ENCODE measurements at regions of chr14 and their contacts with region 1.

Region 1: GRCh38 chr14:95561001-95561412 is 26.2 kb downstream of the GLRX5 start:
- DNase-seq: peak; percentile 86
- CTCF ChIP-seq: peak; percentile 96

Region 2: GRCh38 chr14:95786566-95786965 is 225.6 kb after region 1 on chr14:
- in situ Hi-C with region 1: no loop called
- DNase-seq: no peak
- CTCF ChIP-seq: no peak

Region 3: GRCh38 chr14:96090441-96091133 is 529.6 kb after region 1 on chr14:
- in situ Hi-C with region 1: no loop called
- DNase-seq: no peak
- CTCF ChIP-seq: no peak

Region 4: DNA sequence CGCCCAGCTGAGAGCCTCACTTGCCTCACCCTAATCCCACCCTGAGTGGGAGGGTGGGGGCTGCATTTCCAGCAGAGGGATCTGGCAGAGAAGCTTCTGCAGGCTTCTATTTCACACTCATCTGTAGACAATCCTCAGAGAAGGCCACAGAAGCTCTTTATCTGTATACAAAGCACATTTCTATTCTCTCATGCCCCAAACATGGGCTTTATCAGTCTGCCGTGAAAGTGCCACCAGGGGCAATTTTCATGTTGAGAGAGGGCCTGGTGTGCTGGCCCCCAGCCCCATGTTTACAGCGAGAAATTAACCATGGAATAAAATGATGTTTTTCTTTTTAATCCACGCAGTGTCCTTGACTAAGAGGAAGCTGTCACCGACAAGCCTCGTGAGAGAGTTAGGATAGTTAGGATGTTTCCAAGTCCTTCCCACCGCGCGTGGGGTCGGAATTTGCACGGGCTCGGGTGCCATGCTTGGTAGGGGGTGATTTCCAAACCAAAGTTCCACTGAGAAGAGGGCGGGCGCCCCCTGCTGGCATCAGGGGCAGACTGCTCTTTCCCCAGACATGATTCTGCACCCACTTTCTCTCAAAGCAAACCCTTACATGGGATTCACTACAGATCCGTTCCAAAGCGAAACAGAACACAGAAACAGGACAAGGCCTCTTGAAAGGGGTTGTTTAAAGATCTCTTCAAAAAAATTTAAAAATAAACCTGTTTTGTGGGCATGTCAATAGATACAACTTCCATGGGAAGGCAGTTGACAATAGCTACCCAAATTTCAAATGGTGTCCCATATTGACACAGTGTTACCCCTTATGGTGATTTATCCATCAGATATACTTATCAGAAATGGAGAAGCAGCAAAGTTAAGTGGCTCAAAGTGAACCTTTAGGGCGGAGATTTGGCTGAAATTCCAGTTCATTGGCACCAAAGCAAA is 714.4 kb after region 1 on chr14:
- in situ Hi-C with region 1: loop called (anchors 25 kb)
- DNase-seq: peak; percentile 80
- CTCF ChIP-seq: peak; percentile 90

Measured in GM13977 (cell line).